ENCODE measurements at regions of chr10 and their contacts with region 1.

Region 1: DNA sequence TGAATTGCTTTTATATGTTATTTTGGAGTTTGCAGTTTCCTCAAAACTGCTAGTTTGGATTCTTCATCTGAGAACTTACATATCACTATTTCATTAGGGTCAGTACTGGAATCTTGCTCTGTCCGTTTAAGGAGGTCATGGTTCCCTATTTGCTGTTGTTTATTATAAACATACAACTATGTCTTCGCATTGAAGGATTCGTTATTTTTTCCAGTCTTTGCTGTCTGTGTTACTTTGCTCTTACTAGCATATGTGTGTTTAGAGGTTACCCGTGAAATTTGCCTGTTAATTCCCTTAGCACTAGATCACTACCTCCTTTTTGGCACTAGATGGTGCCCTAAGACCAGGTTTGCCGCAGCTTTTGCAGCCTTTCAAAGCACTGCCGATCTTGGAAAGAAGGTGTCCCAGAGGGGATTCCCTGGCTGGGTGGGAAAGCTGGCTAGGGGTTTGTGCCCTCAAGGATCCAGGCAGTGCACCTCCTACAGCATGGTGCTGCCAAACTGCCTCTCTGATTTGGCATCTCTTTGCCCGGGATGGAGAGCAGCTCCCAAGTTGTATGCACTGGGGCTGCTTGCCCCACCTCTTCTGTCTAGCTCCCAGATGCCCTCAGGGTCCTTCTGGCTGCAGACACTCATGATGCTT is 103.1 kb upstream of the APBB1IP start:
- DNase-seq: peak; percentile 48
- H3K4me3 ChIP-seq: no peak overlapping the region
- H3K27ac ChIP-seq: no peak overlapping the region
- H3K4me1 ChIP-seq: no peaks in the 10 kb centered on the region
- H3K27me3 ChIP-seq: no peaks in the 10 kb centered on the region
- CTCF ChIP-seq: peak; percentile 68 to 72

Region 2: GRCh38 chr10:26556748-26557640 is 221.9 kb after region 1 on chr10:
- CTCF ChIA-PET with region 1: no interaction called
- dilution Hi-C with region 1: no loop called
- in situ Hi-C with region 1: loop called (anchors 5 to 10 kb)
- intact Hi-C with region 1: loop called (anchors 1 kb)
- DNase-seq: peak; percentile 26
- H3K4me3 ChIP-seq: no peak overlapping the region
- H3K27ac ChIP-seq: no peak overlapping the region
- H3K4me1 ChIP-seq: no peaks in the 10 kb centered on the region
- H3K27me3 ChIP-seq: no peaks in the 10 kb centered on the region
- CTCF ChIP-seq: peak; percentile 81 to 94

Region 3: DNA sequence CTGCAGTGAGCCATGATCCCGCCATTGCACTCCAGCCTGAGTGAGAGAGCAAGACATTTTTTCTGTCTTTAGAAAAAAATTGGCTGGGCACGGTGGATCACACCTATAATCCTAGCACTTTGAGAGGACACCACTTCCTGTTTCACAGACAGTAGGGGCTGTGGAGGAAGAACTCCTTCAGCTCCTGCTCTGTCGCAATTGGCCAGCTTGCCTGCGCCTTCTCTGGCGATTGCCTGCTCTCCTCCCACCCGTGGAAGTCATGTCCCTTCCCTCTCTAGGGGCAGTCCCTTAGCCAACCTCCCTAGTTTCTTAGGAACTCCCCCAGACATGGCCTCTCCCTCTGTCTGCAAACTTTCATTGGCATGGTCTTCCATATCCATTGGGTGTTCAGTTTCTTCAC is 371.2 kb after region 1 on chr10:
- CTCF ChIA-PET with region 1: no interaction called
- dilution Hi-C with region 1: no loop called
- in situ Hi-C with region 1: no loop called
- intact Hi-C with region 1: loop called (anchors 10 kb)
- DNase-seq: no peak
- H3K4me3 ChIP-seq: no peak overlapping the region
- H3K27ac ChIP-seq: no peak overlapping the region
- H3K4me1 ChIP-seq: no peaks in the 10 kb centered on the region
- H3K27me3 ChIP-seq: no peaks in the 10 kb centered on the region
- CTCF ChIP-seq: no peak

Measured in mammary epithelial cell (primary cell).